A673 (cell line): ENCODE measurements at regions of chr3 and their contacts with region 1.

Region 1: GRCh38 chr3:39255503-39256325 is 24.1 kb downstream of the CX3CR1 start:
- DNase-seq: no peak
- H3K4me3 ChIP-seq: no peak overlapping the region
- H3K27ac ChIP-seq: no peak overlapping the region
- H3K4me1 ChIP-seq: no peaks in the 10 kb centered on the region
- H3K27me3 ChIP-seq: no peaks in the 10 kb centered on the region
- CTCF ChIP-seq: no peak

Region 2: GRCh38 chr3:39208463-39209055 is 47.2 kb before region 1 on chr3:
- CTCF ChIA-PET with region 1: no interaction called
- POLR2A ChIA-PET with region 1: no interaction called
- intact Hi-C with region 1: loop called (anchors 5 kb)
- DNase-seq: peak; percentile 66
- H3K4me3 ChIP-seq: no peak overlapping the region
- H3K27ac ChIP-seq: peak overlapping the region; percentile 40
- H3K4me1 ChIP-seq: peaks cover 2% of the 10 kb centered on the region
- H3K27me3 ChIP-seq: no peaks in the 10 kb centered on the region
- CTCF ChIP-seq: peak; percentile 60